HepG2 (cell line): ENCODE measurements at regions of chr1 and their contacts with region 1.

Region 1: GRCh38 chr1:38891753-38892152 is 10.4 kb upstream of the GJA9 start:
- DNase-seq: peak; percentile 61
- ATAC-seq: peak; percentile 88
- H3K4me3 ChIP-seq: no peak overlapping the region
- H3K27ac ChIP-seq: no peak overlapping the region
- H3K4me1 ChIP-seq: peaks cover 48% of the 10 kb centered on the region
- H3K27me3 ChIP-seq: no peaks in the 10 kb centered on the region
- CTCF ChIP-seq: peak; percentile 59
- EP300 ChIP-seq: no peak
- POLR2A ChIP-seq: no peak
- RAD21 ChIP-seq: peak; percentile 58; the same call in 1 of the 2 replicates

Region 2: DNA sequence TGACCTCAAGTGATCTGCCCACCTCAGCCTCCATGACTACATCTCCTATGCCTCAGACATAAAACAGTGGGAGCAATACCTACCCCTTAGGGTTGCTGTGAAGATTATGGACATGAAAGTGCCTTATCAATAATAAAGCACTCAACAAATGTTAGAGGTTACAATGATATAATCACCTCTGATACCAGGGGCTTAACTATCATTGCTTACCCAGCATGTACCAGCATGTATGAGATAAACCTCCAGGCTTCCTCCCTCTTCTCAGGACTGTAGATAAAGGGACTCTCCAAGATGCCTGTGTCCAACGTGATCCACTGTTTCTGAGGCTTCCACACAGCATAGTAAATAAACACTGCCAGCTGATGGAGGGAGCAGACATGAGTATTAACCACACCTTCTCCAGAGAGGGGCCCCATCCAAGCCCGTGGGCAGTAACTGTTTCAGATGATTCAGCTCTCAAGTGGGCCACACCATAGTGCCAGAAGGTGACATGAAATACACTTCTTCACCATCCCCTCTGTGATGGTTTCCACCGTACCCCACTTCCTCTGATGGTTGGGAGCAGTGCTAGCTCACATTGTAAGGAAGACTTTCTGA is 23.7 kb after region 1 on chr1:
- CTCF ChIA-PET with region 1: no interaction called
- POLR2A ChIA-PET with region 1: no interaction called
- in situ Hi-C with region 1: no loop called
- intact Hi-C with region 1: loop called (anchors 1 kb)
- DNase-seq: no peak
- ATAC-seq: no peak
- H3K4me3 ChIP-seq: no peak overlapping the region
- H3K27ac ChIP-seq: no peak overlapping the region
- H3K4me1 ChIP-seq: peaks cover 8% of the 10 kb centered on the region
- H3K27me3 ChIP-seq: no peaks in the 10 kb centered on the region
- CTCF ChIP-seq: no peak
- EP300 ChIP-seq: no peak
- POLR2A ChIP-seq: no peak
- RAD21 ChIP-seq: no peak

Region 3: GRCh38 chr1:39333296-39333695 is 441.5 kb after region 1 on chr1:
- CTCF ChIA-PET with region 1: no interaction called
- POLR2A ChIA-PET with region 1: no interaction called
- in situ Hi-C with region 1: no loop called
- intact Hi-C with region 1: no loop called
- DNase-seq: no peak
- ATAC-seq: no peak
- H3K4me3 ChIP-seq: no peak overlapping the region
- H3K27ac ChIP-seq: no peak overlapping the region
- H3K4me1 ChIP-seq: no peaks in the 10 kb centered on the region
- H3K27me3 ChIP-seq: no peaks in the 10 kb centered on the region
- CTCF ChIP-seq: no peak
- EP300 ChIP-seq: no peak
- POLR2A ChIP-seq: no peak
- RAD21 ChIP-seq: no peak